Heart right ventricle (tissue), 16 donors: ENCODE measurements at regions of chr9 and their contacts with region 1.

Region 1: GRCh38 chr9:121819428-121820231 is 168.2 kb downstream of the DAB2IP start:
- DNase-seq: no peak
- ATAC-seq: peak in 3 of 8 donors; percentile 6 to 40 (median 38)
- H3K4me3 ChIP-seq: peak overlapping the region in 2 of 10 donors; percentile 0 to 17
- H3K27ac ChIP-seq: no peak overlapping the region
- H3K4me1 ChIP-seq: peaks cover 0 to 26% (median 7%) of the 10 kb centered on the region in 9 donors
- H3K27me3 ChIP-seq: no peaks in the 10 kb centered on the region
- CTCF ChIP-seq: no peak

Region 2: DNA sequence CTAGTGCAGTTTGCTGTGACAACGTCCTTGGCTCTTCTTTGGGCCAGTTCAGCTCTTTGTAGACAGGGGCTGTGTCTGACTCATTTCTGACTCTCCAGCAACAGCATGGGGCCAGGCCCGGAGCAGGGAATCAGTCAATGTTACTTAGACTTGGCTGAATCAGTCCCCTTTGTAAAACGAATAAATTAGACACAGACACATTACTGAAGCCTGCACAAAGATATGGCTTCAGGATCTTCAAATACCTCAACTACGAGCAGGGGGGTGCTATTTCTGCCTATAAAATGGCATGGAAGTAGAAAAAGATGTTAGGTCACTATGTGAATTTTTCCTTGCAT is 68.8 kb after region 1 on chr9:
- intact Hi-C with region 1: loop called in 1 of 10 experiments (anchors 10 kb)
- DNase-seq: no peak
- ATAC-seq: peak in 5 of 8 donors; percentile 18 to 65 (median 48)
- H3K4me3 ChIP-seq: no peak overlapping the region
- H3K27ac ChIP-seq: peak overlapping the region in 3 of 10 donors; percentile 9 to 69 (median 36)
- H3K4me1 ChIP-seq: peaks cover 0 to 23% (median 6%) of the 10 kb centered on the region in 9 donors
- H3K27me3 ChIP-seq: no peaks in the 10 kb centered on the region
- CTCF ChIP-seq: no peak

Region 3: DNA sequence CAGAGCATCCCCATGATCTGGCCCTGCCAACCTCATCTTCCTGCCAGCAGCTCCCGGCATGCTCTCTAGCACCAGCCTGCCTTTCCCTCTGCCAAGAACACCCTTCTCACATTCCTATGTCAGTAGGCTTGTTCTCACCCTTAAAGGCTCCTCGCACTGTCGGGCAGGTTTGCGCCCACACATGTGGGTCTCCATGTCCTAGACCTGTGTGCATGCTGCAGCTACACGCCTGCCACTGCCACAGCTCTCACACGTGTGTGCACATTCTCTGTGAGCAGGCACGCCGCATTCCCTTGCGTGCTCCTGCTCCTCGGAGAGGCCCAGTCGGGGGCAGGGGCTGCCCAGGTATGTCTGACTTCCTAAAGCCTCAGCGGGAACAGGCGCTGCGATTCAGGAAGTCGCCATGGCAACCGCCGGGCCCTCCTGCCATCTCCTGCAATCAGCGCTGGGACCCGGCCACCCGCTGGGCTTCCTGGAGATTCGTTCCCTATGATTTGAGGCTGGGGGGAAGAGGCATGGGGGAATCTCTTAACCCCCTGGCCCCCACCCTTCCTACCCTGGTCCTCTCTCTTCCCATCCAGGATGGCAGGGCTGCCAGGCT is 311.9 kb after region 1 on chr9:
- intact Hi-C with region 1: no loop called
- DNase-seq: peak in 1 of 2 donors; percentile 41
- ATAC-seq: peak; percentile 27 to 78 (median 64)
- H3K4me3 ChIP-seq: peak overlapping the region in 2 of 10 donors; percentile 11 to 17
- H3K27ac ChIP-seq: peak overlapping the region in 1 of 10 donors; percentile 6
- H3K4me1 ChIP-seq: peaks cover 9 to 82% (median 40%) of the 10 kb centered on the region in 9 donors
- H3K27me3 ChIP-seq: peaks cover 0 to 20% (median 0%) of the 10 kb centered on the region in 7 donors
- CTCF ChIP-seq: no peak

Region 4: DNA sequence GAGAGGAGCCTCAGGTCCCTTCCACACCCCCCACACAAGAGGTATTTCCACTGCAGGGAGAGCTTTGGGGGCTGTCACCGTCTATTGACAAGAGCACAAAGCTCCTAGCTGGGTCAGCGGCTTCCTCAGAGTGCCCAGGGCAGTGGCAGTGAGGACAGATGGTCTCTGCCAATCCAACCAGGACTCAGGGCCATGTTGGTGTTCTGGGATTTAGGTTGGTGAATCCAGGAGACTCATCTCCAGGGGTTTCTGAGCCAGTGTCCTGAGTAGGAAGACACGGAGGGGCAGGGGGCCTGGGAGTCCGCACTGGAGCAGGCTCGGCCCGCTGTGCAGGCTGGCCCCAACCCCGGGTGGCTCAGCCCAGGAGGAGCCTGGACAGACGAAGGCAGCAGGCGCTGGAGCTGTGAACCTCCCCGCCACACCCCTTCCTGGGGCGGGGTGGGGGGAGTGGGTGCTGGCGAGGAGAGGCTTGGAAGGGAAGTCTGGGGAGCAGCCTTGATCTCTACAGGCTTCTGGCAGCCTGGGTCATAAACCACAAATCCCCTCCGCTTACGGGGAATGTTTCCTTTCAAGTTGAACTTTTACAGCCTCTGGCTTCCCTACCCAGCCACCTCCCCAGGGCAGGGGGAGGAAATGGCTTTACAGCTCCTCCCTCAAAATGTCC is 1556.0 kb after region 1 on chr9:
- intact Hi-C with region 1: loop called in 1 of 10 experiments (anchors 10 kb)
- DNase-seq: no peak
- ATAC-seq: peak in 6 of 8 donors; percentile 8 to 41 (median 34)
- H3K4me3 ChIP-seq: no peak overlapping the region
- H3K27ac ChIP-seq: no peak overlapping the region
- H3K4me1 ChIP-seq: peaks cover 0 to 20% (median 9%) of the 10 kb centered on the region in 9 donors
- H3K27me3 ChIP-seq: peaks cover 9 to 57% (median 50%) of the 10 kb centered on the region in 7 donors
- CTCF ChIP-seq: no peak